Activated CD4-positive, alpha-beta T cell treated with anti-CD3 and anti-CD28 coated beads, Interleukin-2, amount 10 ng/mL, durations not matched to agents 7 days and 5 days (primary cell): ENCODE measurements at regions of chr1 and their contacts with region 1.

Region 1: GRCh38 chr1:26500488-26501175 is 28.4 kb downstream of the HMGN2 start:
- DNase-seq: peak; percentile 90
- H3K4me3 Mint-ChIP-seq: peak overlapping the region; percentile 85
- H3K27ac Mint-ChIP-seq: peak overlapping the region; percentile 97
- H3K4me1 Mint-ChIP-seq: peaks cover 30% of the 10 kb centered on the region
- H3K27me3 Mint-ChIP-seq: no peaks in the 10 kb centered on the region

Region 2: DNA sequence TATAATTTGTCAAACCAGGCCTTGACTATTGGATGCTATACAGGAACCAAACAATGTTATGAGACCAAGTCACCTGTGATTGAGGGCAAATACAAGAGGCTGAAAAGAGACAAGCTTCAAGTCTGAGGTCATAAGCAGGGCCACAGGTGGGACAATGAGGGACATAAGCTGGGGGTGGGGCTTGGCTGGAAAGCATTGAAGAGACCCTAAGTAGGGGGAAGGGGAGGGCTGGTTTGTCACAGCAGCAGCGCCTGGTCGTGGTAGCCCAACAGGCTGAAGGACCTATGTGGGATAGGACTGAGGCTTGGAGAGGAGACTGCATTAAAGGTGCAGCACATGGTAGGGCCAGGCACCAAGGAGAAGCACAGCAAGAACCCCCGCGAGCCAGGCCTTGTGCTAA is 10.5 kb before region 1 on chr1:
- CTCF ChIA-PET with region 1: interaction called, 30 read pairs
- POLR2A ChIA-PET with region 1: interaction called, 6 read pairs
- DNase-seq: no peak
- H3K4me3 Mint-ChIP-seq: no peak overlapping the region
- H3K27ac Mint-ChIP-seq: no peak overlapping the region
- H3K4me1 Mint-ChIP-seq: no peaks in the 10 kb centered on the region
- H3K27me3 Mint-ChIP-seq: no peaks in the 10 kb centered on the region

Region 3: GRCh38 chr1:26516987-26517765 is 16.5 kb after region 1 on chr1:
- CTCF ChIA-PET with region 1: interaction called, 11 read pairs
- POLR2A ChIA-PET with region 1: no interaction called
- DNase-seq: no peak
- H3K4me3 Mint-ChIP-seq: no peak overlapping the region
- H3K27ac Mint-ChIP-seq: no peak overlapping the region
- H3K4me1 Mint-ChIP-seq: no peaks in the 10 kb centered on the region
- H3K27me3 Mint-ChIP-seq: no peaks in the 10 kb centered on the region

Region 4: GRCh38 chr1:26541816-26542711 is 41.4 kb after region 1 on chr1:
- CTCF ChIA-PET with region 1: interaction called, 24 read pairs
- POLR2A ChIA-PET with region 1: interaction called, 5 read pairs
- DNase-seq: peak; percentile 83
- H3K4me3 Mint-ChIP-seq: peak overlapping the region; percentile 76
- H3K27ac Mint-ChIP-seq: peak overlapping the region; percentile 95
- H3K4me1 Mint-ChIP-seq: peaks cover 93% of the 10 kb centered on the region
- H3K27me3 Mint-ChIP-seq: no peaks in the 10 kb centered on the region

Region 5: DNA sequence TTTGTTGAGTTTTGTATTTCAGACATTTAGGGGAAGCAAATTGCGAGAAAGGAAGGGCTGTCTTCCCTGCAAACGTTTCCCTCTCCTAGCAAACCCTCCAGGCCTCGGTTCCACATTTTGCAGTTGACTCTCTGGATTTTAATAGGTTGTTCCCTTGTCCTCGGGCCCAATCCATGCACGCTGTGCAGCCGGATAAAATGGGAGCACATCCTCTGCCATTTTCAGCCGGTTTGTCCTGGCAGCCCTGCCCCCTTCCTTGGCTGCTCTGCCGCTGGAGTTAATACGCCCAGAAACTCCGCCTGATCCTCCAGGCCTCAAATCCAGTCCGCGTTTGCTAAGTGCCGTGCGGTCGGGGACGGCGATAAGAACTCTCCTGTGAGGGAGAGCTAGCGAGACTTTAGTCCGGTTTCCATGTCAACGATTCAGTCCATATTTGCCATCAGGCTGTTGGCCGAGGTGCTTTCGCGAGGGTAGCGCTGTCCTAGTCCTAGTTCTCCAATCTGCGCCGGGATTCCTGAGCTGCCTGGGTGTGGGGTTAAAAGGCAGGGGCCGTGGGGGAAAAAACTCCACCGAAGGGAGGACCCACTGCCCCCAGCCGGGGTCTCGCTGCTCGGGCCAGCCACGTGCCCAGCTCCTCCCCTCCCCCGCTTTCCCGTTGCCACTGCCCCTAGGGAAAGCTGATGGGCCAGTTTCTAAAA is 192.3 kb after region 1 on chr1:
- CTCF ChIA-PET with region 1: interaction called, 10 read pairs
- POLR2A ChIA-PET with region 1: no interaction called
- DNase-seq: peak; percentile 93
- H3K4me3 Mint-ChIP-seq: peak overlapping the region; percentile 83
- H3K27ac Mint-ChIP-seq: peak overlapping the region; percentile 96
- H3K4me1 Mint-ChIP-seq: peaks cover 32% of the 10 kb centered on the region
- H3K27me3 Mint-ChIP-seq: no peaks in the 10 kb centered on the region